ENCODE measurements at regions of chr4 and their contacts with region 1.

Region 1: DNA sequence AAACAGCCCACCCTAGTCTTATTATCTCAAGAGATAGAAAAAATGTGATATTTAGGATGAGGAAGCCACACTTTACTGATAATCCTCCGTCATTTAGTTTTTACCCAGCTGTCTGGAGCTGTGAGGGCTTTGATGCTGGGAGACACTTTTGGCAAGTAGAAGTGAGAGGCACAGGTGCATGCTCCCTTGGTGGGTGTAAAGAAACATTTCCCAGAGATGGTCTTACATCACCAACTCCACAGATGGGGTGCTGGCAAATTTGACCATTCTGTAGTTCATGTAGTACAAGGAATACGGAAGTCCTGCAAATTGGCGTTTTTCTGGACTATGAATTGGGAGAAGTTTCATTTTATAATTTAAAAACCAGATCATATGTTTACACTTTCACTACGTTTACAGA is 28.5 kb downstream of the TRIM61 start:
- DNase-seq: no peak
- ATAC-seq: no peak
- H3K4me3 Mint-ChIP-seq: no peak overlapping the region
- H3K27ac Mint-ChIP-seq: no peak overlapping the region
- H3K4me1 Mint-ChIP-seq: no peaks in the 10 kb centered on the region
- H3K27me3 Mint-ChIP-seq: peaks cover 35% of the 10 kb centered on the region
- CTCF ChIP-seq: no peak

Region 2: DNA sequence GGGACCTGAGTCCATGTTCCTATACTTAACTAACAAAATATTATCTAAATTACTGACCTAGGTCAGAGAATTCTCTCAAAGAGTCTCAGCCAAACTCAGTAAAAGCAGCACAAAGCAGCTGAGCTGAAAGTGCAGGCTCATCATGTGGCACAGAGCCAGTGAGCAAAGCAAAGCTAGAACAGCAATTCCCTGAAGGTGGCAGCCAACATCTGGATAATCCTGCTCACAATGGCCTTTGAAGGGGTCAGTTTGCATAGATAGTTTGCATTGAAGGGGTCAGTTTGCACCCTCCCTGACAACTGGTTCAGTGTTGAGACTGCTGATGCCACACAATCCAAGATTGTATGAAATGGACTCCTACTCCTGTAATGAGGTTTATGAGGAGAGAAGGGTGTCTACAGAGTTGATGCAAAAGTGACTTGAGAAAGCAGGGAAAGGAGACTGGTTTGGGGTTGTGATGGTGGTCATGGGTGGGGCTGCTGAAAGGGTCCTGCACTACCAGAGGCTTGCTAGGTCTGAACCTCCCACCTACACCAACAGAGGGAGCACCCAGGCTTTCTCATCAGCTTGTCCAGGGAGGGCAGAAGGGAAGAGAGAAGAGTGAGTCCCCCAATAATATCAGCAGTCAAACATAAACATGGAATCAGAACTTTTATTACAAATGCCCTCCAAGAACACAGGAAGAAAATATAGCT is 11.3 kb before region 1 on chr4:
- CTCF ChIA-PET with region 1: interaction called, 3 read pairs
- POLR2A ChIA-PET with region 1: no interaction called
- intact Hi-C with region 1: loop called (anchors 1 kb)
- DNase-seq: no peak
- ATAC-seq: no peak
- H3K4me3 Mint-ChIP-seq: no peak overlapping the region
- H3K27ac Mint-ChIP-seq: no peak overlapping the region
- H3K4me1 Mint-ChIP-seq: no peaks in the 10 kb centered on the region
- H3K27me3 Mint-ChIP-seq: peaks cover 22% of the 10 kb centered on the region
- CTCF ChIP-seq: no peak

Measured in activated B cell treated with CpG ODN at 0.5 μM for 24 hours (primary cell).